K562 (cell line): ENCODE measurements at regions of chr11 and their contacts with region 1.

Region 1: GRCh38 chr11:124070915-124071635 is 29.9 kb upstream of the OR10G7 start:
- DNase-seq: peak; percentile 49 to 87 (median 54)
- ATAC-seq: peak; percentile 28
- H3K4me3 ChIP-seq: no peak overlapping the region
- H3K27ac ChIP-seq: no peak overlapping the region
- H3K4me1 ChIP-seq: peaks cover 11 to 17% of the 10 kb centered on the region in 2 experiments; a peak in 4 of 5 replicates
- H3K27me3 ChIP-seq: peaks cover 4 to 13% of the 10 kb centered on the region in 2 experiments; a peak in 4 of 5 replicates
- CTCF ChIP-seq: peak; percentile 65 to 88 (median 80)
- EP300 ChIP-seq: no peak
- POLR2A ChIP-seq: no peak
- RAD21 ChIP-seq: peak; percentile 92

Region 2: GRCh38 chr11:123640677-123641494 is 430.2 kb before region 1 on chr11:
- CTCF ChIA-PET with region 1: no interaction called
- POLR2A ChIA-PET with region 1: no interaction called
- in situ Hi-C with region 1: no loop called
- intact Hi-C with region 1: loop called (anchors 10 kb)
- DNase-seq: peak; percentile 67 to 81 (median 74)
- ATAC-seq: peak; percentile 98
- H3K4me3 ChIP-seq: no peak overlapping the region
- H3K27ac ChIP-seq: no peak overlapping the region
- H3K4me1 ChIP-seq: no peaks in the 10 kb centered on the region
- H3K27me3 ChIP-seq: peaks cover 8 to 48% of the 10 kb centered on the region in 2 experiments
- CTCF ChIP-seq: peak; percentile 81 to 86 (median 86)
- EP300 ChIP-seq: no peak
- POLR2A ChIP-seq: no peak
- RAD21 ChIP-seq: peak; percentile 78 to 84

Region 3: GRCh38 chr11:124194698-124195410 is 123.8 kb after region 1 on chr11:
- CTCF ChIA-PET with region 1: interaction called, 6 read pairs
- POLR2A ChIA-PET with region 1: interaction called, 4 read pairs
- in situ Hi-C with region 1: loop called (anchors 5 kb)
- intact Hi-C with region 1: loop called (anchors 1 kb)
- DNase-seq: peak; percentile 48 to 86 (median 62)
- ATAC-seq: peak; percentile 96
- H3K4me3 ChIP-seq: no peak overlapping the region
- H3K27ac ChIP-seq: no peak overlapping the region
- H3K4me1 ChIP-seq: peaks cover 0 to 18% of the 10 kb centered on the region in 2 experiments; a peak in 3 of 5 replicates
- H3K27me3 ChIP-seq: no peaks in the 10 kb centered on the region
- CTCF ChIP-seq: peak; percentile 77 to 85 (median 82)
- EP300 ChIP-seq: no peak
- POLR2A ChIP-seq: no peak
- RAD21 ChIP-seq: peak; percentile 45 to 82; a peak in 3 of 4 replicates

Region 4: GRCh38 chr11:124285610-124286344 is 214.7 kb after region 1 on chr11:
- CTCF ChIA-PET with region 1: no interaction called
- POLR2A ChIA-PET with region 1: no interaction called
- in situ Hi-C with region 1: no loop called
- intact Hi-C with region 1: no loop called
- DNase-seq: no peak
- ATAC-seq: no peak
- H3K4me3 ChIP-seq: no peak overlapping the region
- H3K27ac ChIP-seq: no peak overlapping the region
- H3K4me1 ChIP-seq: no peaks in the 10 kb centered on the region
- H3K27me3 ChIP-seq: no peaks in the 10 kb centered on the region
- CTCF ChIP-seq: no peak
- EP300 ChIP-seq: no peak
- POLR2A ChIP-seq: no peak
- RAD21 ChIP-seq: no peak

Region 5: DNA sequence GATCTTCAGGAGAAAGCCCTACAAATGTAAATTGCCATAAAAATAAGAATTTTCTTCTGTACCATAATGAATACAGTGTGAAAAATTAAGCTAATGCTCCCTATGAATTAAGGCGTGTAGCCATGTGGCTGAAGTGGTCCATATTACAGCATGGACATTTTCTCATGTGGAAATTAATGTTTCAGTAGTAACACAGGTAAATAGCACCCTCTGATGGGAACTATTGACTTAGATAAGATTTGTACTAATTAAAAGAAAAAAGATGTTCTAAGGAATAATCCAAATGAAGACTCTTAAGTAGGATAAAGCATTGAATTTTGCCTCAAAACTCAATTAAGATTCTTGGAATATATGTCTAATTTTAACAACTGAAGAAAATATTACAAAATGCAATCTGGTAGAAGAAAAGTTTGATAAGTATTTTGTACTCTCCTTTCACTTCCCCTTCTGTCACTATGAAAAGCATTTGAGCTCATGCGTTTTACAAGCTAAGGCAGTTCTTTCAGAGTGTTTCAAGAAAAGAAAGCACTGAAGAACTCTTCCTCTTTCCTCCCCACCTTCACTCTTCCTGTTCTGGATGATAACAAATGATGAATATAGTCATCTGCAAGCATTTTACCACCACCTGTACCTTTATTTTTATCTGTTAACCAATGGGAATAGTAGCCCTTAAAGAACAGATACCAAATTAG is 258.9 kb after region 1 on chr11:
- CTCF ChIA-PET with region 1: no interaction called
- POLR2A ChIA-PET with region 1: no interaction called
- in situ Hi-C with region 1: no loop called
- intact Hi-C with region 1: loop called (anchors 2 kb)
- DNase-seq: no peak
- ATAC-seq: no peak
- H3K4me3 ChIP-seq: no peak overlapping the region
- H3K27ac ChIP-seq: no peak overlapping the region
- H3K4me1 ChIP-seq: no peaks in the 10 kb centered on the region
- H3K27me3 ChIP-seq: no peaks in the 10 kb centered on the region
- CTCF ChIP-seq: no peak; a peak in 1 of 6 replicates
- EP300 ChIP-seq: no peak
- POLR2A ChIP-seq: no peak
- RAD21 ChIP-seq: peak in 1 of 2 experiments; percentile 46; a peak in 2 of 4 replicates

Region 6: DNA sequence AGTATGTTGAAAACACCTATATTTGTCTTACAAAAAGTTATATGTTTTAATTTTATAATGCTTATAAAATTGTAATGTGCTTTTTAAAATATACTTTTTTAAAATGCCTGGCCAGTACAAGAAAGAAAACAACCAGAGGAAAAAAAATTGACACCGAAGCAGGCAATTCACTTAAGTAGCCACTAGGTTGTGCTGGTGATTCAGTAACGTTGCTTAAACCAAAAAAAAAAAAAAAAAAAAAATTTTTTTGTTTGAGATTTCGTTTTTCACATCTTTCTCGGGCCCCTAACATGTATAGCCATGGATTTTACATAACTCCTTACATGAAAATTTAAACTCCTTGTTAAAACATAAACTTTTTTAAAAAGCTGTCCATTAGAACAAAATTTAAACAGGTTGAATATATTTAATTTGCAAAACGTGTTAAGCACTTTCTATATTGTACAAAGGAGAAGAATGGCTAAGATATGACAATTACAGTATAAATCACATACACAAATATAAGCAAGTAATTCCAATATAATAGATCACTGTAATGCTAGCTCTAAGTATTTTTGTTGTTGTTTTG is 344.4 kb after region 1 on chr11:
- CTCF ChIA-PET with region 1: interaction called, 8 read pairs
- POLR2A ChIA-PET with region 1: no interaction called
- in situ Hi-C with region 1: no loop called
- intact Hi-C with region 1: loop called (anchors 1 kb)
- DNase-seq: peak; percentile 29 to 49 (median 41)
- ATAC-seq: no peak
- H3K4me3 ChIP-seq: no peak overlapping the region
- H3K27ac ChIP-seq: no peak overlapping the region
- H3K4me1 ChIP-seq: no peaks in the 10 kb centered on the region
- H3K27me3 ChIP-seq: no peaks in the 10 kb centered on the region
- CTCF ChIP-seq: peak; percentile 48 to 80 (median 53); a peak in 5 of 6 replicates
- EP300 ChIP-seq: no peak
- POLR2A ChIP-seq: no peak
- RAD21 ChIP-seq: peak; percentile 60 to 83

Region 7: DNA sequence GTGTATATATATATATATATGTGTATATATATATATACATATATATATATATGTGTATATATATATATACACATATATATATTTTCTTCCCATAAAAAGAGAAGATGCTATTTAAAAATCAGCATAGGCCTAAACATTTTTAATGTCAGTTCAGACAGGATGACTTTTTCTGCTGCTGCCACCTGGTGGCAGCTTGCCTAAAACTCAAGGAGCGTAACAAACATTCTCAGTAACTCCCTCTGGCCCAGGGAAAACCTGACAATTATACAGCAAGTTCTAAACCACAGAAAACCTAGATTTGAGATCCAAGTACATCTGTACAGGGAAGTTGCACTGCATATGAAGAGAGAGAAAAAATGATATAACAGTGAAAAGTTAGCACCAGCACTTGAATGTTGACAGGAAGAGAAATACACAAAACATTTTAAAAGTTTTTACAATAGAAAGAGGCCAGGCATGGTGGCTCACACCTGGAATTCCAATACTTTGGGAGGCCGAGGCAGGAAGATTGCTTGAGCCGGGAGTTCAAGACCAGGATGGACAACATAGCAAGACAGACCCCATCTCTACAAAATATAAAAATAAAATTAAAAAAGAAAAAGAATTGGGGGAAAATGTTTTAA is 515.3 kb after region 1 on chr11:
- CTCF ChIA-PET with region 1: interaction called, 6 read pairs
- POLR2A ChIA-PET with region 1: no interaction called
- in situ Hi-C with region 1: loop called (anchors 25 kb)
- intact Hi-C with region 1: loop called (anchors 2 kb)
- DNase-seq: peak; percentile 25 to 75 (median 41)
- ATAC-seq: peak; percentile 84
- H3K4me3 ChIP-seq: no peak overlapping the region
- H3K27ac ChIP-seq: no peak overlapping the region
- H3K4me1 ChIP-seq: peaks cover 0 to 5% of the 10 kb centered on the region in 2 experiments; a peak in 2 of 5 replicates
- H3K27me3 ChIP-seq: no peaks in the 10 kb centered on the region
- CTCF ChIP-seq: peak; percentile 66 to 71 (median 67)
- EP300 ChIP-seq: no peak
- POLR2A ChIP-seq: no peak
- RAD21 ChIP-seq: peak; percentile 68 to 73